Activated CD4-positive, alpha-beta memory T cell treated with anti-CD3 and anti-CD28 coated beads for 36 hours (primary cell): ENCODE measurements at regions of chr19 and their contacts with region 1.

Region 1: GRCh38 chr19:48618916-48619691 is at the starts of genes RPL18 and SPHK2:
- DNase-seq: peak; percentile 97
- H3K4me3 Mint-ChIP-seq: peak within 1 kb of the TSS; percentile 96
- H3K27ac Mint-ChIP-seq: peak within 1 kb of the TSS; percentile 97
- H3K4me1 Mint-ChIP-seq: peaks cover 56% of the 10 kb centered on the region
- H3K27me3 Mint-ChIP-seq: no peaks in the 10 kb centered on the region
- total RNA-seq, gene RPL18: 2,095 to 2,140 TPM
- total RNA-seq, gene SPHK2: 24.1 to 24.6 TPM

Region 2: DNA sequence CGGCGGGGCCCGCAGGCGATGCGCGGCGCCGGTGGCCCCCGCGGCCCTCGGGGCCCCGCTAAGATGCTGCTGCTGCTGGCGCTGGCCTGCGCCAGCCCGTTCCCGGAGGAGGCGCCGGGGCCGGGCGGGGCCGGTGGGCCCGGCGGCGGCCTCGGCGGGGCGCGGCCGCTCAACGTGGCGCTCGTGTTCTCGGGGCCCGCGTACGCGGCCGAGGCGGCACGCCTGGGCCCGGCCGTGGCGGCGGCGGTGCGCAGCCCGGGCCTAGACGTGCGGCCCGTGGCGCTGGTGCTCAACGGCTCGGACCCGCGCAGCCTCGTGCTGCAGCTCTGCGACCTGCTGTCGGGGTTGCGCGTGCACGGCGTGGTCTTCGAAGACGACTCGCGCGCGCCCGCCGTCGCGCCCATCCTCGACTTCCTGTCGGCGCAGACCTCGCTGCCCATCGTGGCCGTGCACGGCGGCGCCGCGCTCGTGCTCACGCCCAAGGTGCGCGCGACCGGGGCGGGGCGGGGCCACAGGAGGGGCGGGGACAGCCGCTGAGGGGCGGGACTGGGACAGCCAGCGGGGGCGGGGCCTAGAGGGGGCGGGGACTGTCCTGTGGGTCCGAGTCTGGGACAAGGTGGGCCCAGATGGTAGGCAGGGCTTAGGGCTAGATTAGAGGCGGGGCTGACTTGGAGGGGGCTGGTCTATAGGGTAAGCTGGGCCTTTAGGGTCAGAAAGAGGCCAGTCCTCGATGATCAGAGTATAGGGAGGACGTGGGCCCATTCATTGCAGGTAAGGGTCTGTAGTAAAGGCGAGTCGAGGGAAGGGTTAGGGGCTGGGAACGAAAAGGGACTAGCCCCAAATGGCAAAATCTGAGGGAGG is 220.5 kb before region 1 on chr19:
- CTCF ChIA-PET with region 1: no interaction called
- POLR2A ChIA-PET with region 1: no interaction called
- intact Hi-C with region 1: loop called (anchors 1 kb)
- DNase-seq: peak; percentile 92
- H3K4me3 Mint-ChIP-seq: peak overlapping the region; percentile 76
- H3K27ac Mint-ChIP-seq: peak overlapping the region; percentile 29
- H3K4me1 Mint-ChIP-seq: peaks cover 32% of the 10 kb centered on the region
- H3K27me3 Mint-ChIP-seq: peaks cover 31% of the 10 kb centered on the region

Region 3: DNA sequence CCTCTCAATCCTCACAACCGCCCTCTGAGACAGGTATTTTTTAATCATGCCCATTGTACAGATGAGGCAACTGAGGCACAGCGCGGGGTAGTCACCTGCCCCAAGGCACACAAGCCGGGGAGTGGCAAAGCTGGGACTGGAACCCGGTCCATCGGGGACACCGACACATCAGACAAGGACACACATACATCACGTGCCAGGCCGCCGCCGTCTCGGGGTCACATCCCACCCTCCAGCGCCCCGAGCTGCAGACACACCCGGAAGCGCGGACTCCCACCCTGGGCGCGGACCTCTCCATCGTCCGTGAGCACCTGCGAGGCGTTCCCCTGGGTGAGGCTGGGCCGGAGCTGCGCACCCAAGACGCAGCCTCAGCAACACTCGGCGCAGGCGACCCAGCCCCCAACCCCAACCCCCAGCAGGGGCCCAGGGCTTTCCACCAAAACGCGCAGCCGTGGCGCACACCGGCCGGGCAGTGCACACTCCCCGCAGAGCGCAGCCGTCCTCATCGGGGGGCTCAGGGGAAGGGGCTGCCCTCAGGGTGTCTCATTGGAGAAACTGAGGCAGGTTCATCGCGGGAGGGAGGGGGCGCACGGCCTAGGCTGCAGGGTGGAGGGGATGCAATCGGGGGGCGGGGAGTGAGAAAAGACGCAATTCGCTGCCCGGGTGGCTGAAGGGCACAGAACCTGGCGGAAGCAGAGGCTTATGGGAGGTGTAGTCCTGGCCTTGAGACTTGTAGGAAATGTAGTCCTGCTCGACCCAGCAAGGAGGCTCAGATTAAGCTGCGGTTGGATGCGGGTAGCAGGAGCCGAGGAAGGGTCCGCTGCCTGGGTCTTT is 105.6 kb before region 1 on chr19:
- CTCF ChIA-PET with region 1: no interaction called
- POLR2A ChIA-PET with region 1: interaction called, 5 read pairs
- intact Hi-C with region 1: loop called (anchors 1 kb)
- DNase-seq: peak; percentile 85
- H3K4me3 Mint-ChIP-seq: no peak overlapping the region
- H3K27ac Mint-ChIP-seq: peak overlapping the region; percentile 58
- H3K4me1 Mint-ChIP-seq: peaks cover 14% of the 10 kb centered on the region
- H3K27me3 Mint-ChIP-seq: no peaks in the 10 kb centered on the region

Region 4: DNA sequence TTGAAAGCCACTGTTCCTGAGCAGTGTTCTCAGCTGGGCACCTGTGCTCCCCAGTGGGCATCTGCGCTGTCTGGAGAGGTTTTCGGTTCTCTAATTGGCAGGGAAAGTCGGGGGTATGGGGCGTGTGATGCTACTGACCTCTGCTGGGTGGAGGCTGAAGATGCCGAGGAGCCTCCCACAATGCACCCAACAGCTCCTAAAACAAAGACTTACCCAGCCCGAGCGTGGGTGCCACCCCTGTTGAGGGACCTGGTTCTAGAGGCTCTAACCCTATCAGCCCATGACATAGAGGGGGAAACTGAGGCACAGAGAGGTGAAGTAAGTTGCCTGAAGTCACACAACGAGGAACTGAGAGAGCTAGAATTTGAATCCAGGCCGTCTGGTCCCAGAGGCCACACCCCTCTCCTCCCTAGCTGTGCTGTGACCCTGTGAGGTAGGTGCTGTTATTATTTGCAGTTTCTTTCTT is 10.3 kb before region 1 on chr19:
- CTCF ChIA-PET with region 1: interaction called, 6 read pairs
- POLR2A ChIA-PET with region 1: interaction called, 15 read pairs
- intact Hi-C with region 1: no loop called
- DNase-seq: peak; percentile 73
- H3K4me3 Mint-ChIP-seq: no peak overlapping the region
- H3K27ac Mint-ChIP-seq: no peak overlapping the region
- H3K4me1 Mint-ChIP-seq: no peaks in the 10 kb centered on the region
- H3K27me3 Mint-ChIP-seq: no peaks in the 10 kb centered on the region

Region 5: GRCh38 chr19:48637170-48637947 is 18.3 kb after region 1 on chr19 and contains the start of gene DBP:
- CTCF ChIA-PET with region 1: interaction called, 3 read pairs
- POLR2A ChIA-PET with region 1: interaction called, 10 read pairs
- intact Hi-C with region 1: loop called (anchors 1 kb)
- DNase-seq: peak; percentile 99
- H3K4me3 Mint-ChIP-seq: peak within 1 kb of the TSS; percentile 87
- H3K27ac Mint-ChIP-seq: peak within 1 kb of the TSS; percentile 98
- H3K4me1 Mint-ChIP-seq: peaks cover 48% of the 10 kb centered on the region
- H3K27me3 Mint-ChIP-seq: no peaks in the 10 kb centered on the region
- total RNA-seq, gene DBP: 8.3 to 10.4 TPM

Region 6: DNA sequence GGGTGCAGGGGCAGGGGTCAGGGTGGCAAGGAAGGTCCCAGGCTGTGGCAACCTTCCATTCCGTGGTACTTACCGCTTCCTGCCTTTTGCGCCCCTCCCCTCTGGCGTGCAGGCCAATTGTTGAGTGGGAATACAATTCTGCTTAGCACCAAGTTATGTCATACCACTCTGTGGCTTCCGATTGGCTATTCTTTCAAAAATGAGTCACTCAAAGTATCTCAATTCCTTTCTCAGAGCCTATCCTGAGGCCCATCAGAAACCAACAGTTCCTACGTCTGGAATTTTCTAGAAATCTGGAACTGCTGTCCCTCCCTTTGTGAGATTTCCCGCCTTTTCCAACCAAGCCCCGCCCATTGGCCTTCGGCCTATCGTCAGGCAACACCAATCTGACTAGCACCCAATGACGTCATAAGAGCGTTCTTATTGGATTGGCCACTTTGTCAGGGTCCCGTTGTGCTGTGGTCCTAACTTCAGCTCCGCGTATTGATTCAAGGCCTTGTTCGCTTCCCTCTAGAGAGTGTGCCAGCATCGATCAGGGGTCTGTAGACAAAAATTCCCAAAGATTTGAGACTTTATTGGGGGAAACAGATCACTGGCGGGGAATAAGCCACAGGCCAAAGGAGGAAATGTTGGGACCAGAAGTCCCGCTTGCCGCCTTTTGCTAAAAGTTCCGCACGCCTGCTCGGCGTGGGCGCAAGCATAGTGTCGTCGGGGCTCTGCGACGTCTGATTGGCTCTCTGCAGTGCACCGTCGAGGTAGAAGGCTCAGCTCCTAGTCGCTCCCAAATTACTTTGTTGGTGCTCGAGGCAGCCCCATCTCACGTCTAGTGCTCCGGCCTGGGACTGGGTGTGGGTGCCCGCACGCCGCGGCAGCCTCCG is 42.0 kb after region 1 on chr19:
- CTCF ChIA-PET with region 1: no interaction called
- POLR2A ChIA-PET with region 1: no interaction called
- intact Hi-C with region 1: no loop called
- DNase-seq: peak; percentile 86
- H3K4me3 Mint-ChIP-seq: peak overlapping the region; percentile 55
- H3K27ac Mint-ChIP-seq: peak overlapping the region; percentile 79
- H3K4me1 Mint-ChIP-seq: peaks cover 9% of the 10 kb centered on the region
- H3K27me3 Mint-ChIP-seq: no peaks in the 10 kb centered on the region